Heart right ventricle (tissue), 16 donors: ENCODE measurements at regions of chr9 and their contacts with region 1.

Region 1: DNA sequence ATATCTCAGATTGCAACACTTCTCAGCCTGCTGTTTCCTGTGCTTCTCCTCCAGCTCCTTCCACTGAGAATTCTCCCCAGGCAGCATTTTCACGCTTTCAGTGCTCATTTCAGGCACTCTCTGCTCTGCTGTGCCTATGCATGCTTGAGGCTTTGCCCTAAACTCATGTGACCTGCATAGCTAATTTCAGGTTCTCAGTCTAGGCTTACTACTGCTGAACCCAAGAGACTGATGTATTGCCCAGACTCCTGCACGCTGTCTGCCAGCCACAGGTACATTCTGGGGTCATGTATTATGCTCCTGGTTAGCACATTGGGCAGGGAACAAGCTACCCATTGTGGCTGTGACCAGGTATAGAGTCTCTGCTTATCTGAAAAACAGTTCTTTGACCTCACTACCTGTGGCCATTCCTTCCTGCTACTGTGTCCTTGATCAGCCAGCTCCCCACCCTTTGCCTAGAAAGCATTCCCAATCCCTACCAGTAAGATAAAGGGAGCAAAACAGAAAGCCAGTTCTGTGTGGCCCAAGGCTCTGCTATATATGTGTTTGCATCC is 34.7 kb downstream of the PIP5K1B start:
- DNase-seq: no peak
- ATAC-seq: peak; percentile 13 to 59 (median 46)
- H3K4me3 ChIP-seq: no peak overlapping the region
- H3K27ac ChIP-seq: peak overlapping the region; percentile 22 to 83 (median 68)
- H3K4me1 ChIP-seq: peaks cover 0 to 55% (median 35%) of the 10 kb centered on the region in 9 donors
- H3K27me3 ChIP-seq: no peaks in the 10 kb centered on the region
- CTCF ChIP-seq: no peak

Region 2: DNA sequence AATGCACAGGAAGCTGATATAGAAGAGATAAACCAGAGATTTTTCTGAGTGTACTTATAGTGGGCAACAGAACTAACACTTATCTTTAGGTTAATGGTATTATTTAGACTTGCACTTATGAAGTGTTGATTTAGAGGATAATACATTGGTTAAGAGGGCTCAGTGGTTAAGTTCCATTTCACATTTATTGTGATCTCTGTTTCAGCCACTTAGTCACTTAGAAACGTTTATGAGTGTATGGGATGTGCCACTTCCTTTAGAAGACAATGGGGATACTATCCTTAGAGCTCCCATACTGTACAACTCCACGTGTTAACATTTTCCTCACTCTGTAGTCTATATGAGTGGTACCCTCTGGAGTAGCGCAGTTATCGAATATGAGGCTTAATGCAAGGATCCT is 22.9 kb after region 1 on chr9:
- intact Hi-C with region 1: loop called in 1 of 10 experiments (anchors 2 kb)
- DNase-seq: no peak
- ATAC-seq: peak in 1 of 8 donors; percentile 50
- H3K4me3 ChIP-seq: no peak overlapping the region
- H3K27ac ChIP-seq: no peak overlapping the region
- H3K4me1 ChIP-seq: peaks cover 0 to 48% (median 11%) of the 10 kb centered on the region in 9 donors
- H3K27me3 ChIP-seq: no peaks in the 10 kb centered on the region
- CTCF ChIP-seq: no peak

Region 3: DNA sequence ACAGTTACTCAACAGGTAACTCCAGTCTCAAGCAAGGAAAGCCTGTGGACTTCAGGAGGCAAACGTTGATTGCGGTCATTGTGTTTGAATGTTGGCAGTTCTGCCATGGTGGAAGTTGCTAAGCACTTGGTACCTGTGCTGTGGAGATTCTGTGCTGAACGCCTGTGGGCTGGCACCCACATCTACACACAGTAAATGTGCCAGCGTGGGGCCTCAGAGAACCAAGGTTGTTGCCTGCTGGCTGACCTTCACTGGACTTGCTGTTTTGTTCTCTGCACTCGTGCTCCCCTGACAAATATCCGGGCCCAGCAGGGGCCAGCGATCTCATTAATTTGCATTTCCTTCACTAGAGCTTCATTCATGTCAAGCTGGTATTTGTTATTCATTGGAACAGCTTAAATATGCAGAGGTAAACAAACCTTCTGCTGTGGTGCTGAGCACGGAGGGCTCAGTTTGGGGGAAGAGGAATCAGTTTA is 132.4 kb after region 1 on chr9:
- intact Hi-C with region 1: loop called in 1 of 10 experiments (anchors 10 kb)
- DNase-seq: peak; percentile 48 to 56
- ATAC-seq: peak; percentile 76 to 96 (median 86)
- H3K4me3 ChIP-seq: no peak overlapping the region
- H3K27ac ChIP-seq: peak overlapping the region; percentile 28 to 86 (median 74)
- H3K4me1 ChIP-seq: peaks cover 0 to 50% (median 23%) of the 10 kb centered on the region in 9 donors
- H3K27me3 ChIP-seq: no peaks in the 10 kb centered on the region
- CTCF ChIP-seq: no peak